IMR-90 (cell line): ENCODE measurements at regions of chr18 and their contacts with region 1.

Region 1: DNA sequence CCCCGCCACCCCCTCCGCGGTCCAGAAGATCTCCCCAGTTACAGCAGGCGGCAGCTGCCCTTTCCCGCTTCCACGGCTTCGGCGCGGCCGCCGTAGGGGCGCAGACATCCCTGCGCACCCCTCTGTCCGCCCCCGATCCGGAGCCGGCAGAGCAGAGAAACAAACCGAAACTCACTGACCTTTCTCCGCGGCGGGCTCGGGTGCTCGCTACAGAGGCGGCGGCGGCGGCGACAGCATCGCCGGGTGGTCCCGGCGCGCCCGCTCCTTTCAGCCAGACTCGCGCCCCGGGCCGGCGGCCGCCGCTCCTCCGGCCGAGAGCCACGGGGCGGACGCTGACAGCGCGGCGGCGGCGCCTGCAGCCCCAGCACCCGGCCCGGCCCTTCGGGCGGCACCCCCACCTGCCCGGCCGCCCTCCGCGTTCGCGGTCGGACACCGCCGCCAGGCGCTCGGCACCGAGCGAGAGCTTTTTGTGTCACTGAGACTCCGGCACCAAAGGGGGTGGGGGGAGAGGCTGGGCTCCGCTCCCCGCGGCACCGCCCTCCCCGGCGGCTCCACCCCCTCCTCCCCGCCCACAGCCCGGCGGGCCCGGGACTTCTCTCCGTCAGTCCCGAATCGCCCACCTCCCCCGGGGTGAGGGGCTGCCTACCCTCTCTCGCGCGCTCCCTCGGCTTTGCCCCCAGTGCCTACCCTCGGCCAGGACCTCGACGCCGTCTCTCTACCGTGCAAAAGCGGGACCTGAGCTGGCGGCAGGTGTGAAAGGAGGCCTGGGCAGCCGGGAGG is 1.4 kb upstream of the RNF152 start:
- DNase-seq: peak; percentile 64
- ATAC-seq: peak; percentile 93
- H3K4me3 ChIP-seq: peak overlapping the region; percentile 95
- H3K27ac ChIP-seq: peak overlapping the region; percentile 74
- H3K4me1 ChIP-seq: peaks cover 7% of the 10 kb centered on the region
- H3K27me3 ChIP-seq: no peaks in the 10 kb centered on the region
- CTCF ChIP-seq: peak; percentile 54
- POLR2A ChIP-seq: peak; percentile 76
- RAD21 ChIP-seq: peak; percentile 60

Region 2: DNA sequence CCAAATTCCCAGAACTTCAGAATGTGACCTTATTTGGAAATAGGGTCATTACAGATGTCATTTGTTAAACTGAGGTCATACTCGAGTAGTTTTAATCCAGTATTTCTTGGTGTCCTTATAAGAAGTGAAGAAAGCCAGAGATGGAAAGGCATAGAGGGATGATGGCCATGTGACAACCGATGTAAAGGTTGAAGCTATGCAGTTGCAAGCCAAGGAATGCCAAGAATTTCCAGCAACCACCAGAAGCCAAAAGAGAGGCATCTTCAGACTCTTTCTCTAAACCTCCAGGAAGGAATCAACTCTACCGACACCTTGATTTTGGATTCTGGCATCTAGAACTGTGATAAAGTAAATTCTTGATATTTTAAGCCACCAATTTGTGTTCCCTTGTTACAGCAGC is 318.7 kb before region 1 on chr18:
- CTCF ChIA-PET with region 1: no interaction called
- POLR2A ChIA-PET with region 1: no interaction called
- dilution Hi-C with region 1: no loop called
- in situ Hi-C with region 1: loop called (anchors 10 kb)
- intact Hi-C with region 1: loop called (anchors 5 kb)
- DNase-seq: no peak
- ATAC-seq: peak; percentile 35; the same call in 1 of the 2 replicates
- H3K4me3 ChIP-seq: no peak overlapping the region
- H3K27ac ChIP-seq: no peak overlapping the region
- H3K4me1 ChIP-seq: peaks cover 6% of the 10 kb centered on the region
- H3K27me3 ChIP-seq: no peaks in the 10 kb centered on the region
- CTCF ChIP-seq: no peak
- POLR2A ChIP-seq: no peak
- RAD21 ChIP-seq: no peak

Region 3: GRCh38 chr18:61929851-61930640 is 35.9 kb after region 1 on chr18:
- CTCF ChIA-PET with region 1: no interaction called
- POLR2A ChIA-PET with region 1: no interaction called
- dilution Hi-C with region 1: no loop called
- in situ Hi-C with region 1: no loop called
- intact Hi-C with region 1: no loop called
- DNase-seq: no peak
- ATAC-seq: no peak
- H3K4me3 ChIP-seq: no peak overlapping the region
- H3K27ac ChIP-seq: no peak overlapping the region
- H3K4me1 ChIP-seq: no peaks in the 10 kb centered on the region
- H3K27me3 ChIP-seq: no peaks in the 10 kb centered on the region
- CTCF ChIP-seq: no peak
- POLR2A ChIP-seq: no peak
- RAD21 ChIP-seq: no peak